ENCODE measurements at regions of chr4 and their contacts with region 1.

Region 1: GRCh38 chr4:184538023-184538599 is 63.8 kb upstream of the IRF2 start:
- ATAC-seq: peak; percentile 78 to 89 (median 87)
- H3K4me3 ChIP-seq: peak overlapping the region; percentile 58 to 74 (median 64)
- H3K27ac ChIP-seq: peak overlapping the region; percentile 84 to 89
- H3K4me1 ChIP-seq: peaks cover 7 to 12% of the 10 kb centered on the region in 2 donors

Region 2: GRCh38 chr4:184263910-184264732 is 274.0 kb before region 1 on chr4:
- in situ Hi-C with region 1: loop called in 4 of 9 experiments (anchors 25 kb)
- ATAC-seq: peak; percentile 33 to 93 (median 86)
- H3K4me3 ChIP-seq: no peak overlapping the region
- H3K27ac ChIP-seq: no peak overlapping the region
- H3K4me1 ChIP-seq: peaks cover 0 to 2% of the 10 kb centered on the region in 2 donors

Region 3: DNA sequence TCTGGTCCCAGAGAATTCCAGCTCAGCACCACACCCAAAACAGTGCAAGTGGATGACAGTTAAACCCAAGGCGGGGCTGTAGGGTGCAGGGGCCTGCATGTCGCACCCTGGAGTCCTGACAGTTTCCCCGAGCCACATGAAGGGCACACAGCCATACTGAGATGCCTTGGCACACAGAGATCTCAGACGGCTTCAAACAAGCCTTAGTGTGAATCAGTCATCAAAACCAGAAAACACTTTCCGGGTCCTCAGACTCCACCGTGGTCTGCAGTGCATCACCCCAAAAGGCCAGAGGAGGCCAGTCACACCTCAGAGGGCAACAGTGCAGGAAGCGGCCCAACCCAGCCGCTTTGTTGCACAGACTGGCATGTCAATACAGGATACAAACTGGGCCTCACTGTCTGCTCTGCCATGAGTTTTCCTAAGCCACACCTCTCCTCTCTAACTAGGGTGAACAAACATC is 255.8 kb before region 1 on chr4:
- in situ Hi-C with region 1: loop called in 3 of 9 experiments (anchors 25 kb)
- ATAC-seq: peak in 3 of 8 experiments; percentile 46 to 69 (median 60)
- H3K4me3 ChIP-seq: no peak overlapping the region
- H3K27ac ChIP-seq: no peak overlapping the region
- H3K4me1 ChIP-seq: peaks cover 0 to 6% of the 10 kb centered on the region in 2 donors

Region 4: GRCh38 chr4:184474263-184475095 is 63.6 kb before region 1 on chr4 and contains the start of gene IRF2:
- in situ Hi-C with region 1: loop called in 1 of 9 experiments (anchors 10 kb)
- ATAC-seq: peak; percentile 54 to 86 (median 80)
- H3K4me3 ChIP-seq: peak within 1 kb of the TSS; percentile 50 to 95 (median 56)
- H3K27ac ChIP-seq: peak within 1 kb of the TSS; percentile 64 to 78
- H3K4me1 ChIP-seq: peaks cover 0 to 7% of the 10 kb centered on the region in 2 donors
- total RNA-seq, gene IRF2: 6.3 to 36.7 (median 15.3) TPM

Region 5: DNA sequence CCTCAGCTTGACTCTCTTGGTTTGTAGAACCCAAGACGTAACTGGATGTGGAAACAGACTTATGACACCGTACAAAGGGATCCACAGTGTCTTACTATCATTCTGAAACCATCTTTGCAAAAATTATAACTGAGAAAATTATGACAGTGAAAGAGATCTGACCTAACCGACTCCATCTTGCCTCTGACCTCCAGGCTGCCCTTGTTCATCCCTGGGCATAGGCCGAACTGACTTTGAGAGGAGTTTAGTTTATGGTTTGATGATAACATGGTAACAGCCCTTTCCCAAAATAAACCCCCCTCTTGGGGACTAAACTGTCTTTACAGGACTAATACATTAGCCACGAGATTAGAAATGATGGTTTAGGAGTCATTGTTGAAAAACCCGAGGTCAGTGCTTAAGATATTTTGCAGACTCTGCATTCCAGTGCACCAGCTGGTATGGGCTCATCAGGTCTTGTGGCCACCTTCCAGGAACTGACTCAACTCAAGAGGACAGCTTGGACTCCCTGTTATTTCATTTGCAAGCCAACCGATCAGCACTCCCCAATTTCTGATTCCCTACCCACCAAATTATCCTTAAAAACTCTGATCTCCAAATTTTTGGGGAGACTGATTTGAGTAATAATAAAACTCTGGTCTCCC is 61.5 kb after region 1 on chr4:
- in situ Hi-C with region 1: no loop called
- ATAC-seq: peak in 2 of 8 experiments; percentile 57 to 63
- H3K4me3 ChIP-seq: no peak overlapping the region
- H3K27ac ChIP-seq: no peak overlapping the region
- H3K4me1 ChIP-seq: no peaks in the 10 kb centered on the region

Region 6: GRCh38 chr4:184762100-184762499 is 224.0 kb after region 1 on chr4:
- in situ Hi-C with region 1: no loop called
- ATAC-seq: no peak
- H3K4me3 ChIP-seq: no peak overlapping the region
- H3K27ac ChIP-seq: no peak overlapping the region
- H3K4me1 ChIP-seq: no peaks in the 10 kb centered on the region